Sigmoid colon (tissue), 7 donors: ENCODE measurements at regions of chr6 and their contacts with region 1.

Region 1: DNA sequence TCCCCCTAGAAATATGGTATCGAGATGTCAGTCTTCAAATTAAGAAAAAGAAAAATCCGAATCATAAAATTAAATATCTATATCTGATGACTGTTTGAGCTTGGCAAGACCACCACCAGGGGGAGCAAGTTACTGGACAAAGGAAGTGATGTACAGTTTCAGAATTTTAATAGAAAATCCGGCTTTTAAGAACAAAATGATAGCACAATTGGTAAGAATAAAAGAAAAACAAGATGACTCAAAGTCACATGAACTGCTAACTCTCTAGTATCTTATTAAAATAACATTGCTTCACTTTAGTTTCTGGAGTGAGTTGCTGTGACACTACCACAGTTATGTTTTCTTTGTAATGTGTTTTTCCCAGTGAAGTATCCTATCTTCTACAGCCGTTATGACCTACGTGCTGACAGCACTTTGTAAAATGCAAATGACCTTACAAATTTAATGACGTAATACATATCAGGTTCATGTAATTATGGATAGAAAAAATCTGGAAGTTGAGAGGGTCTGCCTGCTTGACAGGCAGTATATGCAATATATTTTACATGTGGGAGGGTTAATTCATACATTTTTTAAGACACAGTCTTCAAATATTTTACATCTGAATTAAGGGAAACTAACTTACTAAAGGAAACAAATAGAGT is 405.3 kb upstream of the HS3ST5 start:
- DNase-seq: no peak
- H3K4me3 ChIP-seq: no peak overlapping the region
- H3K27ac ChIP-seq: no peak overlapping the region
- H3K4me1 ChIP-seq: no peaks in the 10 kb centered on the region
- H3K27me3 ChIP-seq: no peaks in the 10 kb centered on the region
- CTCF ChIP-seq: peak in 3 of 4 experiments; percentile 20 to 57 (median 28)
- EP300 ChIP-seq: no peak
- POLR2A ChIP-seq: no peak

Region 2: GRCh38 chr6:114569669-114570068 is 178.4 kb before region 1 on chr6:
- intact Hi-C with region 1: no loop called
- DNase-seq: no peak
- H3K4me3 ChIP-seq: no peak overlapping the region
- H3K27ac ChIP-seq: no peak overlapping the region
- H3K4me1 ChIP-seq: no peaks in the 10 kb centered on the region
- H3K27me3 ChIP-seq: no peaks in the 10 kb centered on the region
- CTCF ChIP-seq: no peak
- EP300 ChIP-seq: no peak
- POLR2A ChIP-seq: no peak

Region 3: DNA sequence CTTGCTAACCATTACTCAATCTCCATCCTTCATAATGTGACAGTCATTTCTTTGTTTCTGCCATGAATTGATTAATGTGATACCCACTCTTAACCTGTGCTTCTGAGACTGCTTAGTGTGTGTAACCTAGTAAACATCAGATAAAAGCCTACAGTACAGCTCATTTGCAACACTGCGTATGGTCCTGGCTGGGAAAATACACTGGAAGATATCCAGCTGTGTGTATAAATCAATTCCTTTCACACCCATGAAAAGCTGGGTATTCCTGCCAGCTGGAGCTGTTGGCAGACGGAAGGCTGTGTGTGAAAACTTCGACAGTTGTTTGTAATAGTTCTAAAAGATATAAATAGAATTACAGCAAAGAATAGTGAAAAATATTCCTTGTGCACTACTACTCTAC is 803.4 kb after region 1 on chr6:
- intact Hi-C with region 1: no loop called
- DNase-seq: no peak
- H3K4me3 ChIP-seq: no peak overlapping the region
- H3K27ac ChIP-seq: no peak overlapping the region
- H3K4me1 ChIP-seq: peaks cover 0 to 26% (median 12%) of the 10 kb centered on the region in 4 donors
- H3K27me3 ChIP-seq: no peaks in the 10 kb centered on the region
- CTCF ChIP-seq: no peak
- EP300 ChIP-seq: no peak
- POLR2A ChIP-seq: no peak

Region 4: GRCh38 chr6:115896538-115897129 is 1148.5 kb after region 1 on chr6:
- intact Hi-C with region 1: loop called (anchors 5 kb)
- DNase-seq: no peak
- H3K4me3 ChIP-seq: no peak overlapping the region
- H3K27ac ChIP-seq: no peak overlapping the region
- H3K4me1 ChIP-seq: no peaks in the 10 kb centered on the region
- H3K27me3 ChIP-seq: no peaks in the 10 kb centered on the region
- CTCF ChIP-seq: peak in 3 of 4 experiments; percentile 39 to 69 (median 41)
- EP300 ChIP-seq: no peak
- POLR2A ChIP-seq: no peak